Dorsolateral prefrontal cortex (tissue), 120 donors: ENCODE measurements at regions of chr6 and their contacts with region 1.

Region 1: GRCh38 chr6:53986165-53986720 is 125.0 kb upstream of the MLIP start:
- DNase-seq: peak in 6 of 10 donors; percentile 35 to 73 (median 48)
- H3K4me3 ChIP-seq: no peak overlapping the region
- H3K27ac ChIP-seq: peak overlapping the region in 20 of 59 donors; percentile 13 to 84 (median 64)
- H3K27me3 ChIP-seq: peaks cover 0 to 5% (median 0%) of the 10 kb centered on the region in 45 donors
- CTCF ChIP-seq: peak; percentile 43 to 84 (median 73)

Region 2: GRCh38 chr6:55239099-55239498 is 1252.9 kb after region 1 on chr6:
- intact Hi-C with region 1: loop called (anchors 5 kb)
- DNase-seq: no peak
- H3K4me3 ChIP-seq: no peak overlapping the region
- H3K27ac ChIP-seq: no peak overlapping the region
- H3K27me3 ChIP-seq: no peaks in the 10 kb centered on the region
- CTCF ChIP-seq: no peak